Transverse colon (tissue), 4 donors: ENCODE measurements at regions of chr10 and their contacts with region 1.

Region 1: GRCh38 chr10:13470270-13470669 is 58.5 kb downstream of the BEND7 start:
- DNase-seq: no peak
- H3K4me3 ChIP-seq: no peak overlapping the region
- H3K27ac ChIP-seq: no peak overlapping the region
- H3K4me1 ChIP-seq: no peaks in the 10 kb centered on the region
- H3K27me3 ChIP-seq: no peaks in the 10 kb centered on the region
- CTCF ChIP-seq: no peak
- EP300 ChIP-seq: no peak
- POLR2A ChIP-seq: no peak

Region 2: DNA sequence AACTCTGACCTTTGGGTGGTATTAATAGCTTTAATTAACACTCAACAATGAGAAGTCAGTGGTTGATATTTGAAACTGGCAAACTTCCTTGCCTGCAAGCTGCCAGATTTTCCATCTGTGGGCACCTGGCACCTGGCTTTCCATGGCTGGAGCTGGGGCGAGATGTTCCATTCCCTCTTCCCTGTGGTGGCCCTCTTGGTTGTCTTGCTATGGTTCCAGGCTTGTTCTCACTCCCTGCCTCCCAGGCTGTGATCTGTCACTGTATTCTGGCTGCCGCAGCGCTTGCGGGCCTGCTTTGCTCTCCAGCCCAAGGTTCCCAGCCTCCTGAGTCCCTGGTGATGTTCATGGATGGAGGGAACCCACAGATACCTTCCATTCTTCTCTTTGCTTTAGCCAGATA is 659.5 kb after region 1 on chr10:
- in situ Hi-C with region 1: no loop called
- intact Hi-C with region 1: loop called (anchors 10 kb)
- DNase-seq: no peak
- H3K4me3 ChIP-seq: no peak overlapping the region
- H3K27ac ChIP-seq: no peak overlapping the region
- H3K4me1 ChIP-seq: no peaks in the 10 kb centered on the region
- H3K27me3 ChIP-seq: no peaks in the 10 kb centered on the region
- CTCF ChIP-seq: no peak
- EP300 ChIP-seq: no peak
- POLR2A ChIP-seq: no peak